ENCODE measurements at regions of chr17 and their contacts with region 1.

Region 1: DNA sequence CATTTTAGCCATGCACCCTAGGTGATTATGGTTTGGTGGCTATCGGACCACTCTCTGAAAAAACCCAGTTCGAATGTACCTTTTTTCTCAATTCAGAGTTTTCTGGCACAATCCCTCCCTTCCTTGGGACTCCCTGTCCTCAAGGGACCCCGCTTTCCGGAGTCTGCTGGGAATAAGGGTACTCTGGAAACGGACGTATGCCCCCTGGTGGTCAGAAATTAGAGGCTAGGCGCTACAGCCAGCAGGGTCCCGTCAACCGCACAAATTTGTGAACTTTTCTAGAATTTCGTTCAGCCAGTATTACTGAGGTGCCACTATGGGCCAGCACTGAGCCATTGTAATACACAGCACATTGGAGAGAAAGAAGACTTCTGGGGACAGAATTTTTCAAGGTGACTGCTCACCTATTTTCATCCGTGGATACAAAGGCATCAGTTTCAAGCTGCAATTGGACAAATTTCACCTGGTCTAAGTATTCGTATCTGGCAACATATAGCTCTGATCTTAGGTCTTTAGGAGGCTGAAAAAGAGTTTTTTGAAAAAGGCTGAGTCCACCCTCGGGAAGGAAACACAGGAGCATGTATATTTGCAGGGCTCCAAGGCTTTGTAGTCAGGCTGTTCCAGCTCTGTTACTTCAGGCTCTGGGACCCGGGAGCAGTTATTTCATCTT is 27.1 kb upstream of the CRYBA1 start:
- DNase-seq: peak; percentile 54
- H3K4me3 ChIP-seq: no peak overlapping the region
- H3K27ac ChIP-seq: no peak overlapping the region
- H3K4me1 ChIP-seq: peaks cover 33% of the 10 kb centered on the region
- H3K27me3 ChIP-seq: no peaks in the 10 kb centered on the region
- CTCF ChIP-seq: peak; percentile 85 to 87

Region 2: DNA sequence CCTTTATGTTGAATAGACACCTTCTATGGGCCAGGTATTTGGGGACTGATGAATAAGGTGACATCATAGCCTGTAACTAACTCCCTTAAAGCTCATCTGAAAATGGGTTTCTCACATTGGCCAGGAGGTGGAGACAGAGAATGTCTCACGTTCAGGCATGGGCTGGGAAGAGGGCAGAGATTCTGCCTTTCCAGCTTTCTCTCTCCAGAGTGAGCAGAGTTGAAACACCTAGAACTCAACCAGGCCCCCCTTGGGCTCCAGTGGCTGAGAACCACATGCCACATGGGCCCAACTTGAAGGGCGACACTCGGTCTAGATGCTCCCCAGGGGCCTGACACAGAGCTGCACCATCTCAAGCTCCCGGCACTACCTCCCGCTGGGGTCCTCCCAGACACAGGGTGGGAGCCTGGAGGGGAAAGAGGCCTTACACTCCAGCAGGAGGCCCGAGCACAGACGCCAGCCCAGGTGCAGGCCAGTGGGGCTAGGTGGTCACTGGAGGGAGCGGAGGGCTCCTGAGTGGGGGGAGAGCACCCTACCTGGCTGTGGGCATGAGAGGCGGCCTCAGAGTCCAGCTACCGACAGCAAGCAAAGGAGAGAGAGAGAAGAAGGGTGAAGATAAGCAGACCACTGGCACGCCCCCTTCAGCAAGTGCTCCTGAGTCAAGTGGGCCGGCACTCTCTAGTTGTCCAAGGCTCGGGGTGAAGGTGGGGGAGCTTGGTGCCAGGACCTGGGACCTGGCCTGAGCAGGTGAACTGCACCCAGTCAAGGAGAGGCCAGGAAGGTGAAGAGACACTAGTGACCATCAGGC is 95.2 kb before region 1 on chr17:
- CTCF ChIA-PET with region 1: no interaction called
- dilution Hi-C with region 1: no loop called
- in situ Hi-C with region 1: no loop called
- intact Hi-C with region 1: loop called (anchors 1 kb)
- DNase-seq: peak; percentile 68
- H3K4me3 ChIP-seq: no peak overlapping the region
- H3K27ac ChIP-seq: no peak overlapping the region
- H3K4me1 ChIP-seq: peaks cover 3% of the 10 kb centered on the region
- H3K27me3 ChIP-seq: no peaks in the 10 kb centered on the region
- CTCF ChIP-seq: peak; percentile 70 to 78

Region 3: GRCh38 chr17:29140051-29140621 is 79.4 kb before region 1 on chr17:
- CTCF ChIA-PET with region 1: interaction called, 17 read pairs
- dilution Hi-C with region 1: no loop called
- in situ Hi-C with region 1: loop called in 1 of 2 experiments (anchors 5 kb)
- intact Hi-C with region 1: no loop called
- DNase-seq: peak; percentile 45
- H3K4me3 ChIP-seq: no peak overlapping the region
- H3K27ac ChIP-seq: no peak overlapping the region
- H3K4me1 ChIP-seq: peaks cover 47% of the 10 kb centered on the region
- H3K27me3 ChIP-seq: no peaks in the 10 kb centered on the region
- CTCF ChIP-seq: no peak

Region 4: GRCh38 chr17:29155227-29155965 is 64.1 kb before region 1 on chr17:
- CTCF ChIA-PET with region 1: interaction called, 5 read pairs
- dilution Hi-C with region 1: loop called (anchors 5 kb)
- in situ Hi-C with region 1: loop called in 1 of 2 experiments (anchors 10 kb)
- intact Hi-C with region 1: no loop called
- DNase-seq: peak; percentile 85
- H3K4me3 ChIP-seq: no peak overlapping the region
- H3K27ac ChIP-seq: peak overlapping the region; percentile 81
- H3K4me1 ChIP-seq: peaks cover 92% of the 10 kb centered on the region
- H3K27me3 ChIP-seq: no peaks in the 10 kb centered on the region
- CTCF ChIP-seq: no peak

Region 5: GRCh38 chr17:29180034-29180787 is 39.3 kb before region 1 on chr17 and contains the start of gene MYO18A:
- CTCF ChIA-PET with region 1: interaction called, 6 read pairs
- dilution Hi-C with region 1: no loop called
- in situ Hi-C with region 1: no loop called
- intact Hi-C with region 1: loop called (anchors 1 kb)
- DNase-seq: peak; percentile 78
- H3K4me3 ChIP-seq: peak within 1 kb of the TSS; percentile 39 to 66 (median 56)
- H3K27ac ChIP-seq: peak within 1 kb of the TSS; percentile 95
- H3K4me1 ChIP-seq: peaks cover 47% of the 10 kb centered on the region
- H3K27me3 ChIP-seq: no peaks in the 10 kb centered on the region
- CTCF ChIP-seq: peak; percentile 63 to 83
- total RNA-seq, gene MYO18A: 62.3 to 102 TPM

Region 6: DNA sequence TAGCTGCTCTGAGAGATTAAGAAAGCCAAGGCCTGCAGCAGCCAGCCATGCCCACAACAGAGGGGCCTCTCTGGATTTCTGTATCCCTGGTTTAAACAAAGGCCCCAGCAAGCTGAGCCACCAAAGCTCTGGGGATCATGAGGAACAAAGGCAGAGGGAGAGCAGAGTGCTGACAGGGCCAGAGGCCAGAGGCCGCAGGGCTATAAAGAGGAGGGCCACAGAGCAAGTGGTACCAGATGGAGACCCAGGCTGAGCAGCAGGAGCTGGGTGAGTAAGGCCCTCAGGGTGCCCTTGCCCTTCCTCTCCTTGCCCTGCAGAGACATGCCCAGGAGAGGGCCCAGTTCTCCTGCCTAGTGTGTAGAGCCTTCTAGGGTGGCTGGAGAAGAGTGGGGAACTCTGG is 27.1 kb after region 1 on chr17 and contains the start of gene CRYBA1:
- CTCF ChIA-PET with region 1: no interaction called
- dilution Hi-C with region 1: no loop called
- in situ Hi-C with region 1: no loop called
- intact Hi-C with region 1: no loop called
- DNase-seq: peak; percentile 21
- H3K4me3 ChIP-seq: no peak within 1 kb of the TSS
- H3K27ac ChIP-seq: no peak within 1 kb of the TSS
- H3K4me1 ChIP-seq: peaks cover 13% of the 10 kb centered on the region
- H3K27me3 ChIP-seq: no peaks in the 10 kb centered on the region
- CTCF ChIP-seq: peak in 1 of 2 donors; percentile 28
- total RNA-seq, gene CRYBA1: not detected

Region 7: GRCh38 chr17:29273924-29274323 is 54.4 kb after region 1 on chr17:
- CTCF ChIA-PET with region 1: no interaction called
- dilution Hi-C with region 1: no loop called
- in situ Hi-C with region 1: no loop called
- intact Hi-C with region 1: no loop called
- DNase-seq: no peak
- H3K4me3 ChIP-seq: no peak overlapping the region
- H3K27ac ChIP-seq: no peak overlapping the region
- H3K4me1 ChIP-seq: no peaks in the 10 kb centered on the region
- H3K27me3 ChIP-seq: no peaks in the 10 kb centered on the region
- CTCF ChIP-seq: no peak

Region 8: GRCh38 chr17:29347831-29348629 is 128.5 kb after region 1 on chr17:
- CTCF ChIA-PET with region 1: no interaction called
- dilution Hi-C with region 1: no loop called
- in situ Hi-C with region 1: no loop called
- intact Hi-C with region 1: no loop called
- DNase-seq: peak; percentile 29
- H3K4me3 ChIP-seq: no peak overlapping the region
- H3K27ac ChIP-seq: no peak overlapping the region
- H3K4me1 ChIP-seq: no peaks in the 10 kb centered on the region
- H3K27me3 ChIP-seq: no peaks in the 10 kb centered on the region
- CTCF ChIP-seq: no peak

Measured in mammary epithelial cell (primary cell).